ENCODE measurements at regions of chr2 and their contacts with region 1.

Region 1: GRCh38 chr2:238596571-238597551 is 170.1 kb downstream of the ASB1 start:
- DNase-seq: no peak
- ATAC-seq: peak; percentile 91

Region 2: GRCh38 chr2:238379096-238379810 is 217.6 kb before region 1 on chr2:
- intact Hi-C with region 1: loop called (anchors 5 kb)
- DNase-seq: no peak
- ATAC-seq: no peak

Region 3: GRCh38 chr2:238700117-238700457 is 103.2 kb after region 1 on chr2:
- intact Hi-C with region 1: loop called (anchors 1 kb)
- DNase-seq: peak; percentile 75
- ATAC-seq: peak; percentile 79

Measured in Right ventricle myocardium inferior (tissue), 1 donor.